ENCODE measurements at regions of chr17 and their contacts with region 1.

Region 1: GRCh38 chr17:82655038-82655479 is 6.8 kb upstream of the WDR45B start:
- DNase-seq: peak; percentile 49
- H3K4me3 Mint-ChIP-seq: peak overlapping the region; percentile 4
- H3K27ac Mint-ChIP-seq: peak overlapping the region; percentile 32
- H3K4me1 Mint-ChIP-seq: peaks cover 22% of the 10 kb centered on the region
- H3K27me3 Mint-ChIP-seq: no peaks in the 10 kb centered on the region
- CTCF ChIP-seq: no peak

Region 2: DNA sequence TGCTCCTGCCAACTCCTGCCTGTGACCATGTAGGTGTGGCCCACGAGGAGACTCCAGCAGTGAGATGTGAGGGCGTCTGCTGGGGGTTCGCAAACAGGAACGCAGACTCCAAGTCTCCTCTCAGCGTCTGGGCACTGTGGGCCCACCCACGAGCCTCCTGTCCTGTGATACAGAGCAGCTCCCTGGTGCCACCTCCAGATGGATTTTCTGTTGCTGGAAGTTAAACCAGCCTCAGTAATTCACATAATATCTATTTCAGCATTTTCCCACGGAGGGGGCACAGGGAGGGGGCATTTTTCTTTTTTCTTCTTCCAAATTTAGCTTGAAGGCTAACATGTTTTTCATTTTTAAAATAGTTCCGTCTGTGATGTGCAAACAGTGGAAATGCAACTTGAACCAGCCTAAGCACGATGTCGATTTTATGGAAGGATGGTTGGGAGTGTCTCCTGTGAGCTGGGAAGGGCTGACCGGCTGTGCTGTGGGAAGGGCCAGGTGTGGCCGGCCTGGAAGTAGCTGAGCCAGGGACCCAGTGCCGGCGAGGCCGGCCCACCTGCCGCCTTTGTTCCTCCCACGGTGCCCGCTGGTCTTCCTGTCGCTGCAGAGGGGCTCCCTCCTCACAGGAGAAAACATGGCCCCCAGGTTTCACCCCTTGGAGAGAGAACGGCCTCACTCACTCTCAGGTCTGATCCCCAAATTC is 47.3 kb after region 1 on chr17:
- CTCF ChIA-PET with region 1: no interaction called
- intact Hi-C with region 1: loop called (anchors 10 kb)
- DNase-seq: no peak
- H3K4me3 Mint-ChIP-seq: no peak overlapping the region
- H3K27ac Mint-ChIP-seq: no peak overlapping the region
- H3K4me1 Mint-ChIP-seq: peaks cover 19% of the 10 kb centered on the region
- H3K27me3 Mint-ChIP-seq: no peaks in the 10 kb centered on the region
- CTCF ChIP-seq: no peak

Measured in Calu3 (cell line).